Endothelial cell of umbilical vein (primary cell): ENCODE measurements at regions of chr10 and their contacts with region 1.

Region 1: GRCh38 chr10:75294866-75295701 is 59.3 kb upstream of the COMTD1 start:
- DNase-seq: peak; percentile 75
- H3K4me3 ChIP-seq: peak overlapping the region; percentile 35 to 54 (median 47)
- H3K27ac ChIP-seq: peak overlapping the region; percentile 4
- H3K4me1 ChIP-seq: peaks cover 13% of the 10 kb centered on the region
- H3K27me3 ChIP-seq: peaks cover 0 to 2% of the 10 kb centered on the region in 2 experiments
- CTCF ChIP-seq: peak; percentile 11 to 20
- POLR2A ChIP-seq: no peak

Region 2: GRCh38 chr10:75335983-75336382 is 40.9 kb after region 1 on chr10:
- CTCF ChIA-PET with region 1: no interaction called
- POLR2A ChIA-PET with region 1: no interaction called
- dilution Hi-C with region 1: no loop called
- intact Hi-C with region 1: no loop called
- DNase-seq: no peak
- H3K4me3 ChIP-seq: no peak overlapping the region
- H3K27ac ChIP-seq: no peak overlapping the region
- H3K4me1 ChIP-seq: no peaks in the 10 kb centered on the region
- H3K27me3 ChIP-seq: peaks cover 2 to 3% of the 10 kb centered on the region in 2 experiments
- CTCF ChIP-seq: no peak
- POLR2A ChIP-seq: no peak

Region 3: GRCh38 chr10:75395066-75395931 is 100.2 kb after region 1 on chr10:
- CTCF ChIA-PET with region 1: interaction called, 14 read pairs
- POLR2A ChIA-PET with region 1: no interaction called
- dilution Hi-C with region 1: no loop called
- intact Hi-C with region 1: loop called (anchors 2 kb)
- DNase-seq: peak; percentile 27
- H3K4me3 ChIP-seq: peak overlapping the region in 1 of 3 experiments; percentile 11
- H3K27ac ChIP-seq: no peak overlapping the region
- H3K4me1 ChIP-seq: peaks cover 30% of the 10 kb centered on the region
- H3K27me3 ChIP-seq: peaks cover 6 to 25% of the 10 kb centered on the region in 2 experiments
- CTCF ChIP-seq: peak; percentile 83 to 92
- POLR2A ChIP-seq: no peak